PC-9 (cell line): ENCODE measurements at regions of chr7 and their contacts with region 1.

Region 1: DNA sequence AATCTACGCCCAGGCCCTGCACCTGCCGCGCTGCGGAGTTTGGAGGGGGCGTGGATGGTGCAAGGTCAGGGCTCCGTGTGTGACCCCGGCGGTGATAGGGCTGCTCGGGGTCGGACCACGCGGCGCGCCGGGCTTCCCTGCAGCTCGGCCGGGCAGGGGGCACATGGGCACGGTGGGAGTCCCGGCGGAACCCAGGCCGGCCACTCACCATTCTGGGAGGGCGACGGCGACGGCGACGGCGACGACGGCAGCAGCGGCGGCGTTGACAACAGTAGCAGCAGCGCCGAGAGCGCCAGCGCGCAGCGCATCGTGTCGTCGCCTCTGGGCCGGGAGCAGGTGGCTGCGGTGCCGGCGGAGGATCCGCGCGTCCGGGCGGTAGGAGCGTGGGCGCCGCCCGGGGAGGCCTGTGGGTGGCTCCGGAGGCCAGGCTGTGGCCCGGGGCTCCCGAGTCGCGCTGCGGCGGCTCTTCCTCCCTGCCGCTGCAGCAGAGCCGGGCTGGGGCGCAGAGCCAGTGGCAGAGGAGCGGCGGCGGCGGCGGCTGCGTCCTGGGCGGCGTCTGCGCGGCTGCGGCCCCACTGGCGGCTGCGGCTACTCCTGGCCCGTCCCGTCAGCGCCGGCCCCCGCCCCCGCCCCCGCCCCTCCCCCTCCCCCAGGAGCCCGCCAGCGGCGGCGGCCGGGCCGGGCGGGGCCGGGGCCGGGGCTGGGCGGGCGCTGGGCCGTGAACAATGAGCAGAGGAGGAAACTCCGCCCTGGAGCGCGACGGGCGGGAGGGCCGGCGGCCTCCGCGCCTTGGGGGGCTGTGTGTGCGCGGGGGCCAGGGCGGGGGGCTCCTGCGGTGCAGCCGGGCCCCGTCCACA is at the start of gene PODXL:
- DNase-seq: peak in 1 of 2 experiments; percentile 87
- H3K4me3 ChIP-seq: peak within 1 kb of the TSS; percentile 75
- H3K27ac ChIP-seq: no peak within 1 kb of the TSS
- H3K4me1 ChIP-seq: peaks cover 42% of the 10 kb centered on the region
- H3K27me3 ChIP-seq: no peaks in the 10 kb centered on the region
- CTCF ChIP-seq: no peak
- total RNA-seq, gene PODXL: 57.5 and 75.3 TPM in 2 replicates

Region 2: DNA sequence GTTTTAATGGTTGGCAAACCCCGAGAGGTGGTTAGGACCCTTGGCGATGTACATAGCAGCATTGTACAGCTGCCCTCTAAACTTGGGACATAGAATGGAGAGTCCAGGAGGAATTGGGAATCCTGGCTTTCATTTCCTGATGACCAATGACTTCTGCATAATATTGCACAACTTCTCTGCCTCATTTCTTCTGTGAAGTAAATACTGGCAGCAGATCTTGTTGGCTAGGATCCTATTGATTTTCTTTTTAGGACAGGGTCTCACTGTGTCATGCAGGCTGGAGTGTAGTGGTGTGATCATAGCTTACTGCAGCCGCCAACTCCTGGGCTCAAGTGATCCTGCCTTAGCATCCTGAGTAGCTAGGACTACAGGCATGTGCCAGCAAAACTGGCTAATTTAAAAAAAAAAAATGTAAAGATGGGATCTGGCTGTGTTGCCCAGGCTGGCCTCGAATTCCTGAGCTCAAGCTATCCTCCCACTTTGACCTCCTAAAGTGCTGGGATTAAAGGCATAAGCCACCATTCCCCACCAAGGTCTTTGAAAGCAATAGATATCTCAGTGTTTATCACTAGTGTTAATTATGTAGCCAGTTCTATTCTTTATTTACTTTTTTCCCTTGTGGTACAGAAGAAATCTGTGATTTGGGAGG is 57.9 kb before region 1 on chr7:
- CTCF ChIA-PET with region 1: no interaction called
- POLR2A ChIA-PET with region 1: no interaction called
- intact Hi-C with region 1: no loop called
- DNase-seq: no peak
- H3K4me3 ChIP-seq: no peak overlapping the region
- H3K27ac ChIP-seq: no peak overlapping the region; the same call in 1 of the 2 replicates
- H3K4me1 ChIP-seq: no peaks in the 10 kb centered on the region
- H3K27me3 ChIP-seq: no peaks in the 10 kb centered on the region
- CTCF ChIP-seq: no peak

Region 3: GRCh38 chr7:131521651-131522163 is 34.6 kb before region 1 on chr7:
- CTCF ChIA-PET with region 1: interaction called, 4 read pairs
- POLR2A ChIA-PET with region 1: no interaction called
- intact Hi-C with region 1: loop called (anchors 1 kb)
- DNase-seq: peak; percentile 89 to 90
- H3K4me3 ChIP-seq: no peak overlapping the region
- H3K27ac ChIP-seq: peak overlapping the region; percentile 76
- H3K4me1 ChIP-seq: peaks cover 37% of the 10 kb centered on the region
- H3K27me3 ChIP-seq: no peaks in the 10 kb centered on the region
- CTCF ChIP-seq: no peak

Region 4: GRCh38 chr7:131604841-131605279 is 48.6 kb after region 1 on chr7:
- CTCF ChIA-PET with region 1: no interaction called
- POLR2A ChIA-PET with region 1: no interaction called
- intact Hi-C with region 1: loop called (anchors 2 kb)
- DNase-seq: peak; percentile 11 to 80
- H3K4me3 ChIP-seq: no peak overlapping the region
- H3K27ac ChIP-seq: 0 out of 2 replicates have a peak overlapping the region, but pooled peaks have one; percentile 6
- H3K4me1 ChIP-seq: peaks cover 42% of the 10 kb centered on the region
- H3K27me3 ChIP-seq: no peaks in the 10 kb centered on the region
- CTCF ChIP-seq: no peak

Region 5: GRCh38 chr7:131649003-131649541 is 92.8 kb after region 1 on chr7:
- CTCF ChIA-PET with region 1: no interaction called
- POLR2A ChIA-PET with region 1: interaction called, 12 read pairs
- intact Hi-C with region 1: no loop called
- DNase-seq: no peak
- H3K4me3 ChIP-seq: no peak overlapping the region
- H3K27ac ChIP-seq: no peak overlapping the region
- H3K4me1 ChIP-seq: peaks cover 27% of the 10 kb centered on the region
- H3K27me3 ChIP-seq: no peaks in the 10 kb centered on the region
- CTCF ChIP-seq: no peak